Activated CD4-positive, alpha-beta T cell treated with anti-CD3 and anti-CD28 coated beads, Interleukin-2, amount 10 ng/mL, durations not matched to agents 24 days and 14 days (primary cell): ENCODE measurements at regions of chr9 and their contacts with region 1.

Region 1: DNA sequence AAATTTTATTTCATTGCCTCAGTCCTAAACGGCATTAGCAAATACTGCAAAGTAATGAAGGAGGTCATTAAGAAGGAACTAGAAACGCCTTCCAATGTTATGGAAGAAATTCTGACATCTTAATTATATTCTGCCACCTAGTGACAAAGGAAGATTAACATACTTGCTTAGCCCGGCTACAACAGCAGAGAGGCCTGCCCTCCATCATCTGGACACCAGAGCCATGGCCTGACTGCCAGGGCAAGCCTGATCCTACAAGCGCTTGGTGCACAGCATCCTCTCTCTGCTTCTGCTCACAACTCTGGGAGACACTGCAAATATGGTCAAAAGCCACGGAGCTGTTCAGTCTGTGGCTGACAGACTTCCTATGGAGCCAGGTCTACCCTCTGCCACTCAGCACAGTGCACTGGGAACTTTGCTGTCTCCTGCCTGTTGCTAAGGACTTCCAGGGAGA is 87.3 kb upstream of the SLC44A1 start:
- DNase-seq: peak; percentile 68
- H3K4me3 Mint-ChIP-seq: no peak overlapping the region
- H3K27ac Mint-ChIP-seq: no peak overlapping the region
- H3K4me1 Mint-ChIP-seq: peaks cover 6% of the 10 kb centered on the region
- H3K27me3 Mint-ChIP-seq: no peaks in the 10 kb centered on the region

Region 2: GRCh38 chr9:104780799-104781395 is 376.3 kb before region 1 on chr9:
- intact Hi-C with region 1: loop called (anchors 10 kb)
- DNase-seq: peak; percentile 57
- H3K4me3 Mint-ChIP-seq: no peak overlapping the region
- H3K27ac Mint-ChIP-seq: no peak overlapping the region
- H3K4me1 Mint-ChIP-seq: no peaks in the 10 kb centered on the region
- H3K27me3 Mint-ChIP-seq: peaks cover 2% of the 10 kb centered on the region

Region 3: DNA sequence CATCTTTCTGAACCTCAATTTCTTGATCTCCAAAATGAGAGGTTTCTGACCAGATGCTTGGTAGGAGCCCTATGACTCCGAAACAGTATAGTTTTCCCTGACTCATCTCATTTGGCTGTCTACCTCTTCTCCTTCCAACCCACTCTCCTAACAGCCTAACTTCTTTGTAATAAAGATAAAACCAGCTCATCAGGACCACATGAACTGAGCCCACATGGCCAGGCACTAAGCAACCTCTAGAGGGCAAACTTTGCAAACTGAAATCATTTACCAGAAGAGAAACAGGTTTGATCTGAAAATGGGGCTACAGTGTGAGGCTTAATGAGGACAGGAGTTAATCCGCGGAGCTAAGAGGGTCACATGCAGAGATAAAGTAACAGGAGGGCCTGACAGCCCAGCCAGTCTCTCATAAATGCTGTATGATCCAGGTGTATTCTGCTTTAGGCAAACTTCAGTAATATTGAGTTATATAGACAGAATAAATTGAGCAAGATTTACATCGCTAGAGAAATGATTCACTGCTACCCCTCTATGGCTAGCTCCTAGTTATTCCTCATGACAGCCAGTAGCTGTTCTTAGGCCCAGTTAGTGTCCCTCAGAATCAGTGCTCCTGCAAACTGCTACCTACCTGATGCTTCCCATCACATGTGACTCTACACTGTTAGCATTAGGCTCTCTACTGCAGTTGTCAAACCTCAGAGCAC is 293.8 kb before region 1 on chr9:
- intact Hi-C with region 1: loop called (anchors 1 kb)
- DNase-seq: peak; percentile 83
- H3K4me3 Mint-ChIP-seq: no peak overlapping the region
- H3K27ac Mint-ChIP-seq: no peak overlapping the region
- H3K4me1 Mint-ChIP-seq: peaks cover 4% of the 10 kb centered on the region
- H3K27me3 Mint-ChIP-seq: no peaks in the 10 kb centered on the region

Region 4: GRCh38 chr9:105414947-105415661 is 257.9 kb after region 1 on chr9:
- intact Hi-C with region 1: loop called (anchors 1 kb)
- DNase-seq: peak; percentile 87
- H3K4me3 Mint-ChIP-seq: no peak overlapping the region
- H3K27ac Mint-ChIP-seq: no peak overlapping the region
- H3K4me1 Mint-ChIP-seq: peaks cover 11% of the 10 kb centered on the region
- H3K27me3 Mint-ChIP-seq: peaks cover 39% of the 10 kb centered on the region

Region 5: DNA sequence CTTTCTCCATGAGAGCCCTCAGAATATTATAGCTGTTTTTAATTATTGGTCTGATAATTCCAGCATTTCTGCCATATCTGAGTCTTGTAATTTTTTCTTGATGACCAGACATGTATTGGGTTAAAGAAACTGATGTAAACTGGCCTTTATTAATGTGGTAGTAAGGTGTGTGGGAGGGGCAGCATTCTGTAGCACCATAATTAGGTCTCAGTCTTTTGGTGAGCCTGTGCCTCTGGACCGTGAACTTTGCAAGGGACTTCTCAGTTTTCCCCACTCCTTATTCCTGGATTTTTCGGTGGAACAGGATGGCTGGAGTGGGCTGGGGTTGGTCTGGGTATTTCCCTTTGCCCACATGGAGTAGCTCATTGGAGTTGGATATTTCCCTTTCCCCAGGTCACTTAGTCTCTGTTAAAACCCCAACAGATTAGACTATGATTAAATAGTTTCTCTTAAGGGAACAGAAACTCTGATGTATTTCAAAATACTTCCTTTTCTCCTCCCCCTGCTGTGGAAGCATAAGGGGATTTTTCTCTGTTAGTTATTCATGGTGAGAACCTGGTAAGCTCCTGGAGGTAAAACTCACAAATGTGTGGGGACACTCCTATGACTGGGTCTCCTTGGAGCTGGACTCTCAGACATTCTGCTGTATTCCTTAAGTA is 343.1 kb after region 1 on chr9:
- intact Hi-C with region 1: no loop called
- DNase-seq: no peak
- H3K4me3 Mint-ChIP-seq: no peak overlapping the region
- H3K27ac Mint-ChIP-seq: no peak overlapping the region
- H3K4me1 Mint-ChIP-seq: peaks cover 3% of the 10 kb centered on the region
- H3K27me3 Mint-ChIP-seq: no peaks in the 10 kb centered on the region